CD4-positive, alpha-beta T cell (primary cell): ENCODE measurements at regions of chr18 and their contacts with region 1.

Region 1: DNA sequence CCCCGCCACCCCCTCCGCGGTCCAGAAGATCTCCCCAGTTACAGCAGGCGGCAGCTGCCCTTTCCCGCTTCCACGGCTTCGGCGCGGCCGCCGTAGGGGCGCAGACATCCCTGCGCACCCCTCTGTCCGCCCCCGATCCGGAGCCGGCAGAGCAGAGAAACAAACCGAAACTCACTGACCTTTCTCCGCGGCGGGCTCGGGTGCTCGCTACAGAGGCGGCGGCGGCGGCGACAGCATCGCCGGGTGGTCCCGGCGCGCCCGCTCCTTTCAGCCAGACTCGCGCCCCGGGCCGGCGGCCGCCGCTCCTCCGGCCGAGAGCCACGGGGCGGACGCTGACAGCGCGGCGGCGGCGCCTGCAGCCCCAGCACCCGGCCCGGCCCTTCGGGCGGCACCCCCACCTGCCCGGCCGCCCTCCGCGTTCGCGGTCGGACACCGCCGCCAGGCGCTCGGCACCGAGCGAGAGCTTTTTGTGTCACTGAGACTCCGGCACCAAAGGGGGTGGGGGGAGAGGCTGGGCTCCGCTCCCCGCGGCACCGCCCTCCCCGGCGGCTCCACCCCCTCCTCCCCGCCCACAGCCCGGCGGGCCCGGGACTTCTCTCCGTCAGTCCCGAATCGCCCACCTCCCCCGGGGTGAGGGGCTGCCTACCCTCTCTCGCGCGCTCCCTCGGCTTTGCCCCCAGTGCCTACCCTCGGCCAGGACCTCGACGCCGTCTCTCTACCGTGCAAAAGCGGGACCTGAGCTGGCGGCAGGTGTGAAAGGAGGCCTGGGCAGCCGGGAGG is 1.4 kb upstream of the RNF152 start:
- DNase-seq: peak; percentile 46 to 85 (median 62)
- ATAC-seq: peak; percentile 88
- H3K4me3 ChIP-seq: peak overlapping the region; percentile 61
- H3K4me3 Mint-ChIP-seq: peak overlapping the region; percentile 86
- H3K27ac ChIP-seq: no peak overlapping the region
- H3K27ac Mint-ChIP-seq: no peak overlapping the region
- H3K4me1 ChIP-seq: peaks cover 20% of the 10 kb centered on the region
- H3K4me1 Mint-ChIP-seq: peaks cover 14% of the 10 kb centered on the region
- H3K27me3 ChIP-seq: peaks cover 23 to 28% of the 10 kb centered on the region in 2 experiments
- H3K27me3 Mint-ChIP-seq: peaks cover 54% of the 10 kb centered on the region
- CTCF ChIP-seq: no peak

Region 2: DNA sequence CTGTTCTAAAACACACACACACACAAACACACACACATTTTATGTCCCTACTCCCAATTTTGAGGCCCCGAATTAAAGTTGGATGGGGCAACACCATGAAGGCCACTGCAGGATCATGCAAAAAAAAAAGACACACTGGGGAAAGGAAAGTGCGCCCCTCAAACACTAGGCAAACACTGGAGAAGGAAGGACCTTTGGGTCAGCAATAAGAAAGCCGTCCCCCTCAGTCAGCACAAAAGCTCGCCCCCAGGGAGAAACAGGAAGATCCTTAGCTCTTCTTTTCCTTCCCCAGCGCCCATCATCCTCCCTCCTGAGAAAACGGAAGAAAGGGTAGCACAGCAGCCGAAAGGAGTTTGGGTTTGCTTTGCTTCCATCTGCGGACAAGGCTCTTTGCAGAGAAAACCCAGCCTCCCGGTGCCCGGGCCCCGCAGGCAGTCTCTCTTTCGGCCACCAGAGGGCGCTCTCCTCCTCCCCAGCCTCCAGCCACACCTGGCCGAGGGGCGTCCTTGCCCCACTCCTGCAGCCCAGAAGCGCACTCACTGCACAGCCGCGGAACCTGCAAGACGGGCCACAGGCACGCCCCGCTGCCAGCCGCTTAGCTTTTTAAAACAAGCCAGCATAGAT is 312.5 kb before region 1 on chr18:
- CTCF ChIA-PET with region 1: no interaction called
- POLR2A ChIA-PET with region 1: no interaction called
- intact Hi-C with region 1: loop called in 1 of 2 experiments (anchors 5 kb)
- DNase-seq: peak; percentile 45 to 77 (median 56)
- ATAC-seq: peak; percentile 72
- H3K4me3 ChIP-seq: no peak overlapping the region
- H3K4me3 Mint-ChIP-seq: no peak overlapping the region
- H3K27ac ChIP-seq: no peak overlapping the region
- H3K27ac Mint-ChIP-seq: no peak overlapping the region
- H3K4me1 ChIP-seq: peaks cover 8% of the 10 kb centered on the region
- H3K4me1 Mint-ChIP-seq: peaks cover 9% of the 10 kb centered on the region
- H3K27me3 ChIP-seq: peaks cover 14 to 17% of the 10 kb centered on the region in 2 experiments
- H3K27me3 Mint-ChIP-seq: peaks cover 82% of the 10 kb centered on the region
- CTCF ChIP-seq: peak; percentile 95

Region 3: GRCh38 chr18:61963705-61964104 is 69.5 kb after region 1 on chr18:
- CTCF ChIA-PET with region 1: no interaction called
- POLR2A ChIA-PET with region 1: no interaction called
- intact Hi-C with region 1: no loop called
- DNase-seq: no peak
- ATAC-seq: no peak
- H3K4me3 ChIP-seq: no peak overlapping the region
- H3K4me3 Mint-ChIP-seq: no peak overlapping the region
- H3K27ac ChIP-seq: no peak overlapping the region
- H3K27ac Mint-ChIP-seq: no peak overlapping the region
- H3K4me1 ChIP-seq: no peaks in the 10 kb centered on the region
- H3K4me1 Mint-ChIP-seq: no peaks in the 10 kb centered on the region
- H3K27me3 ChIP-seq: no peaks in the 10 kb centered on the region
- H3K27me3 Mint-ChIP-seq: peaks cover 9% of the 10 kb centered on the region
- CTCF ChIP-seq: no peak

Region 4: GRCh38 chr18:61975526-61976326 is 81.6 kb after region 1 on chr18:
- CTCF ChIA-PET with region 1: no interaction called
- POLR2A ChIA-PET with region 1: no interaction called
- intact Hi-C with region 1: no loop called
- DNase-seq: peak in 5 of 14 experiments; percentile 8 to 87 (median 84)
- ATAC-seq: peak; percentile 83
- H3K4me3 ChIP-seq: no peak overlapping the region
- H3K4me3 Mint-ChIP-seq: peak overlapping the region; percentile 22
- H3K27ac ChIP-seq: peak overlapping the region in 1 of 2 donors; percentile 43
- H3K27ac Mint-ChIP-seq: peak overlapping the region; percentile 71
- H3K4me1 ChIP-seq: peaks cover 4% of the 10 kb centered on the region
- H3K4me1 Mint-ChIP-seq: peaks cover 24% of the 10 kb centered on the region
- H3K27me3 ChIP-seq: no peaks in the 10 kb centered on the region
- H3K27me3 Mint-ChIP-seq: no peaks in the 10 kb centered on the region
- CTCF ChIP-seq: no peak